A673 (cell line): ENCODE measurements at regions of chr4 and their contacts with region 1.

Region 1: DNA sequence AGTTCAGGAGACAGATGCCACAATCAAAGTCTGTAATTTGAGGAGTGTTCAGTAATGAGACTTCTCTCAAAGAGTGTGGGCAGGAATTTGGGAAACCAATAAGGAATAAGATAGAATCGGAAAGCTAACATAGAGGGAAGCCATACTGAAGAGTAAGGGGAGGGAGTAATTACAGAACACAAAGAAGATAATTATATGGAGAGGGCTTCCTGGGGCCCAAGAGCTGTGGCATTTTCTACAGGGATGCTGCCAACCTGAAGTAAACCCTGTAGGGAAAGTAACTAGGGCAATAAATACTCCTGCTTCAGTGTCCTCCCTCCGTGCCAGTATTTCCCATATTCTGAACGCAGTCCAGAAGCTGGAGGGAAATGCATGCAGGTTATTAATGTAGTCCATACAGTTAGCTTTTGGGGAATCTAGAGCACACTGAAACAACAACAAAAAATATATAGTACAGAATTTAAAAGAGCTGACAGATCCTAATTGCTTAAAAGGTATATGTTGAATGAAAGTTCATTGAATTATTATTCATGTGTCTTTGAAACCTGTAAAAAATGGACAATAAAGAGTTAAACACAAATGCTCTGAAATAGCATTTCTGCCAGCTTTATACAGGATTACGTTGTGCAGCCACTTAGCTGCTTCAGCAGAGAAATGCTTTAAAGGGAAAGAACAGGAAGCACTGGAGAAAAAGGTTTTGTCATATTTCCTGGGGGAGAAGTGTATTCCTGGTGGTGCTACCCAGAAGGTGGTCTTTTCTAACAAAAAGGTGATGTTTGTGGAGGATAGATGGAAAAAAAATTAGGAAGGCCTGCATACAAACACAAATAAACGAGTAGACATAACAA is 48.0 kb downstream of the CXXC4 start:
- DNase-seq: peak; percentile 31
- H3K4me3 ChIP-seq: peak overlapping the region; percentile 6
- H3K27ac ChIP-seq: peak overlapping the region; percentile 47
- H3K4me1 ChIP-seq: peaks cover 20% of the 10 kb centered on the region
- H3K27me3 ChIP-seq: no peaks in the 10 kb centered on the region
- CTCF ChIP-seq: no peak

Region 2: GRCh38 chr4:104381729-104382128 is 64.9 kb before region 1 on chr4:
- CTCF ChIA-PET with region 1: no interaction called
- POLR2A ChIA-PET with region 1: no interaction called
- intact Hi-C with region 1: no loop called
- DNase-seq: no peak
- H3K4me3 ChIP-seq: no peak overlapping the region
- H3K27ac ChIP-seq: no peak overlapping the region
- H3K4me1 ChIP-seq: no peaks in the 10 kb centered on the region
- H3K27me3 ChIP-seq: no peaks in the 10 kb centered on the region
- CTCF ChIP-seq: no peak

Region 3: GRCh38 chr4:104591510-104591911 is 144.9 kb after region 1 on chr4:
- CTCF ChIA-PET with region 1: no interaction called
- POLR2A ChIA-PET with region 1: no interaction called
- intact Hi-C with region 1: no loop called
- DNase-seq: peak; percentile 31
- H3K4me3 ChIP-seq: no peak overlapping the region
- H3K27ac ChIP-seq: no peak overlapping the region
- H3K4me1 ChIP-seq: peaks cover 22% of the 10 kb centered on the region
- H3K27me3 ChIP-seq: no peaks in the 10 kb centered on the region
- CTCF ChIP-seq: no peak

Region 4: DNA sequence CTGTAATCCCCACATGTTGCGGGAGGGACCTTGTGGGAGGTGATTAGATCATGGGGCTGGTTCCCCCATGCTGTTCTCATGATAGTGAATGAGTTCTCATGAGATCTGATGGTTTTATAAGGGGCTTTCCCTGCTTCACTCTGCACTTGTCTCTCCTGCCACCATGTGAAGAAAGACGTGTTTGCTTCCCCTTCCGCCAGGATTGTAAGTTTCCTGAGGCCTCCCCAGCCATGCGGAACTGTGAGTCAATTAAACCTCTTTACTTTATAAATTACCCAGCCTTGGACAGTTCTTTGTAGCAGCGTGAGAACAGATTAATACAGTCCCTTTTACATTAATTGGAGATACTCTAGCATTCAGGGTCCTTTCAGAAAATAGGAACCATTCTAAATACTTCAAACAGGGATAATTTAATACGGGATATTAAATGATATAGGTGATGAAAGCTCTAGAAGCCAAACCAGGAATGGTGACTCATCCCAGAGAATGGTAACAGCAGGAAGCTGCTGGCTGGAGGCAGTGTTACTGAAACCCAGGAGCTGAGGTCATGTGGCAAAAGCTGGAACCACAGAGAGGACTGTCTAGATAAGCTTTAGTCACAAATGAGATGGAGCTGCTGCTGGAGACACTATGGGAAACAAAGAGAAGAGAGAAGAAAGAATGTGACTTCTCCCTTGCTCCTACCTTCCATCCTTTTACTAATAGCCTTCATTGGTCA is 1319.2 kb after region 1 on chr4:
- CTCF ChIA-PET with region 1: no interaction called
- POLR2A ChIA-PET with region 1: no interaction called
- intact Hi-C with region 1: loop called (anchors 10 kb)
- DNase-seq: peak; percentile 25
- H3K4me3 ChIP-seq: no peak overlapping the region
- H3K27ac ChIP-seq: no peak overlapping the region
- H3K4me1 ChIP-seq: no peaks in the 10 kb centered on the region
- H3K27me3 ChIP-seq: no peaks in the 10 kb centered on the region
- CTCF ChIP-seq: no peak